GM12878 (cell line): ENCODE measurements at regions of chr7 and their contacts with region 1.

Region 1: GRCh38 chr7:104317948-104318629 is 10.3 kb upstream of the LHFPL3 start:
- DNase-seq: no peak
- ATAC-seq: no peak
- H3K4me3 ChIP-seq: no peak overlapping the region
- H3K27ac ChIP-seq: no peak overlapping the region
- H3K4me1 ChIP-seq: no peaks in the 10 kb centered on the region
- H3K27me3 ChIP-seq: no peaks in the 10 kb centered on the region
- CTCF ChIP-seq: no peak
- EP300 ChIP-seq: no peak
- POLR2A ChIP-seq: no peak
- RAD21 ChIP-seq: no peak

Region 2: DNA sequence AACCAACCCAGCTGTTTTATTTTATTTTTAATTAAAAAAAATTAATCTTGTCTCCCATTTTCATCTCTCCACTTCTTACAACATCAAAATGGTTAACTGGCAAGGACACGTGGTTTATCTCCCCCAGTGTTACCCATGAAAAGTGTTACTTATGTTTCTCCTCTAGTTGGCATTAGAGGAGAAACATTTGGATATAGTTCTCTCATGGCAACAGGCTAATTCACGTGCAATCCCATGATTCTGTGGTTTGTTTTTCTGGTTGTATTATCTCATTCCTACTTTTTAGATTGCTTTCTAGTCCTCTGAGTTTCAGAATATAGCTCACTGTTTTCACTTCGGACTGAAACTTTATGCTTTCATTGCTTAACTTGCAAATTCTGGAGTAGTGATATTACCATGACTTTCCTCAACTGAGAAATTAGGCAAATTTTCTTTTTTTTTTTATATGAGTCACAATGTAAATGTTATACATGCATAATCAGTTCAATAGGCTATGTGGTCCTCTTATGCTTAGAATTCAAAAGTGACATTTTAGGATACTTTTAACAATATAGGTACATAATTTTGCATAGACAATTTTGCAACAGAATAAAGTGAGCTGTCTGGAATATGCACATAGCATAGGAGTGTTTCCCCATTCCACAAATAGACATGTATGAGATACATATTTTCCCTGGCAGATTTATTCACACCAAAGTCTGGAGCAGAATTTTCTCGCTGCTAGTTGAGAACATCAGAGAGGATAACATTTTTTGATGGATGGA is 53.3 kb after region 1 on chr7:
- CTCF ChIA-PET with region 1: no interaction called
- POLR2A ChIA-PET with region 1: no interaction called
- RAD21 ChIA-PET with region 1: no interaction called
- SMC1A ChIA-PET with region 1: no interaction called
- in situ Hi-C with region 1: no loop called
- intact Hi-C with region 1: loop called (anchors 10 kb)
- DNase-seq: no peak
- ATAC-seq: no peak
- H3K4me3 ChIP-seq: no peak overlapping the region
- H3K27ac ChIP-seq: no peak overlapping the region
- H3K4me1 ChIP-seq: no peaks in the 10 kb centered on the region
- H3K27me3 ChIP-seq: no peaks in the 10 kb centered on the region; a peak in 1 of 4 replicates
- CTCF ChIP-seq: no peak
- EP300 ChIP-seq: no peak
- POLR2A ChIP-seq: no peak
- RAD21 ChIP-seq: no peak

Region 3: DNA sequence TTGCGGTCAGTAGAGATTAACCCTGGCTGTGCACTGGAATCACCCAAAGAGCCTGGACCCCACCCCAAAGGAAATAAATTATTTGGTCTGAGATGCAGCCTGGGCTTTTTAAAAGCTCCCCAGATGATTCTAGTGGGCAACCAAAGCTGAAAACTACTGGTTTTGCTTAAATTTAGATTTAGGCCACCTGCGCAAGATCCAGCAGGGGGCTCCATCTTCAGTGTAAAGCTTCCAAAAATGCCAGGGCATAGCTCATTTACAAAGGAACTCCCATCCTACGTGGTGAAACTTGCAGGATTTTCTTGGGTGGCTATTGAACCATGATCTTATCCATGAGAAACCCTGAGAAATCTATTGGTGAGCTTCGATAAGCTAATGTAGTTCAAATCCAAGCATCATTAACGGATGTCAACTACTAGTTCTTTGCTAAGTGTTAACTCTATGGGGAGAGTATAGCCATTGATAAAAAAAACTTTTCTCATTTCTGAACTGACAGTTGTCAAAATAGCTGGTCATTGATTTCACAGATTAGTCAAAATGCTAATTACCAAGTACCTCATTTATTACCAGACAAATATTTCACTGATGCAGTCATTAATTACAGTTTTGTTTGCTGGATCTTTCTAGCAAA is 325.6 kb after region 1 on chr7:
- CTCF ChIA-PET with region 1: no interaction called
- POLR2A ChIA-PET with region 1: no interaction called
- RAD21 ChIA-PET with region 1: no interaction called
- SMC1A ChIA-PET with region 1: no interaction called
- in situ Hi-C with region 1: no loop called
- intact Hi-C with region 1: no loop called
- DNase-seq: no peak
- ATAC-seq: peak; percentile 58; the same call in 2 of the 3 replicates
- H3K4me3 ChIP-seq: no peak overlapping the region
- H3K27ac ChIP-seq: no peak overlapping the region
- H3K4me1 ChIP-seq: no peaks in the 10 kb centered on the region
- H3K27me3 ChIP-seq: no peaks in the 10 kb centered on the region; a peak in 2 of 4 replicates
- CTCF ChIP-seq: peak; percentile 54 to 60 (median 59)
- EP300 ChIP-seq: no peak
- POLR2A ChIP-seq: no peak
- RAD21 ChIP-seq: peak; percentile 38